ENCODE measurements at regions of chr3 and their contacts with region 1.

Region 1: GRCh38 chr3:46455231-46456095 is 9.2 kb downstream of the LTF start:
- DNase-seq: no peak
- H3K4me3 ChIP-seq: no peak overlapping the region
- H3K27ac ChIP-seq: no peak overlapping the region
- H3K4me1 ChIP-seq: no peaks in the 10 kb centered on the region
- H3K27me3 ChIP-seq: no peaks in the 10 kb centered on the region
- CTCF ChIP-seq: no peak
- EP300 ChIP-seq: no peak
- POLR2A ChIP-seq: no peak
- RAD21 ChIP-seq: no peak

Region 2: DNA sequence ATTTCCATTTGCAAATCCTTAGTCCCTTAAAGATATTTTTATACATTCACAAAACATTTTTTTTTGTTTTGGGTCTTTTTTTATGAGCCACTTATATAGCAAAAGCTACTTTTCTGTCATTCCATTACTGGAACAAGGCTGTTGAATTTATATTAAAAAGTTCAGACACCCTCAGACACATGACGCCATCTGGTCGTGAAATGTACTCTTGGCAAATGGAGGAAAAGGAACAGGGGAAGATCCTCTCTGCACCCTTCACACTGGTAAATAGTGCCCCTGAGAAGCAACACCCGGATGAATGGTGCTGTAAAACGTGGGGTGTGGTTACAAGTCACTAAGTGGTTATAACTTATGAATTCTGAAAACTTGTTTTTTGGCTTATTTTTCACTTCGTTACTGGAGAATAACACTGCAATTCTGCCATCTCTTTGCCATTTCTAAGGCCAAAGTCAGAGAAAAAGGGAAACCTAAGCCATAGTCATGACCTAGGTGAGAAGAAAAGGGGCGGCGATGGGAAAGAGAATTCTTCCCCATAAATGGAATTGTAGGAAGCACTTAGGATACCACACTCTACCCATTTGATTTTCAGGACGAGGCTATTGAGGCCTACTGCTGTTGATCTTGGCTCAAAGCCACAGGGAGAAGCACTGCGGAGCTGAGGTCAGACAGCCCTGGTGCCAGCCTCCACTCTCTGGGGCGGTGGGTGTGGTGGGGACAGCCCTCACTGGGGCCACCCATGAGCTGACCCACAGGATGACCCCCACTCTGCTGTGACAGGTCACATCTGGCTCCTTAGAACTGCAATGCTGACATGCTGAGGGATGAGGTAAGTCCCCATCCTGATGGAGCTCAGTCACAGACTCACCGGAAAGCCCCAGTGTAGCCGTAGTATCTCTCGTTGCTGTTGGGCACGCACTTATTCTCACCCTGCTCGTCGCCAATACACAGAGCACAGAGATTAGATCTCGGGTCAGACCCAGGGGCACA is 12.6 kb before region 1 on chr3:
- CTCF ChIA-PET with region 1: interaction called, 27 read pairs
- POLR2A ChIA-PET with region 1: interaction called, 3 read pairs
- DNase-seq: no peak
- H3K4me3 ChIP-seq: no peak overlapping the region
- H3K27ac ChIP-seq: no peak overlapping the region
- H3K4me1 ChIP-seq: peaks cover 0 to 5% (median 2%) of the 10 kb centered on the region in 4 experiments; a peak in 4 of 7 replicates
- H3K27me3 ChIP-seq: no peaks in the 10 kb centered on the region
- CTCF ChIP-seq: peak in 2 of 3 experiments; percentile 44 to 57; a peak in 2 of 4 replicates
- EP300 ChIP-seq: no peak
- POLR2A ChIP-seq: no peak
- RAD21 ChIP-seq: peak; percentile 55 to 66